Ovary (tissue), 10 donors: ENCODE measurements at regions of chr3 and their contacts with region 1.

Region 1: GRCh38 chr3:153209596-153209995 is 47.6 kb downstream of the RAP2B start:
- DNase-seq: no peak
- H3K4me3 ChIP-seq: no peak overlapping the region
- H3K27ac ChIP-seq: no peak overlapping the region
- H3K4me1 ChIP-seq: no peaks in the 10 kb centered on the region
- H3K27me3 ChIP-seq: no peaks in the 10 kb centered on the region
- CTCF ChIP-seq: no peak
- EP300 ChIP-seq: no peak
- POLR2A ChIP-seq: no peak

Region 2: GRCh38 chr3:152902141-152902669 is 307.4 kb before region 1 on chr3:
- intact Hi-C with region 1: no loop called
- DNase-seq: no peak
- H3K4me3 ChIP-seq: no peak overlapping the region
- H3K27ac ChIP-seq: no peak overlapping the region
- H3K4me1 ChIP-seq: no peaks in the 10 kb centered on the region
- H3K27me3 ChIP-seq: no peaks in the 10 kb centered on the region
- CTCF ChIP-seq: no peak
- EP300 ChIP-seq: no peak
- POLR2A ChIP-seq: no peak

Region 3: GRCh38 chr3:153144779-153145178 is 64.8 kb before region 1 on chr3:
- intact Hi-C with region 1: loop called in 1 of 4 experiments (anchors 2 kb)
- DNase-seq: no peak
- H3K4me3 ChIP-seq: no peak overlapping the region
- H3K27ac ChIP-seq: no peak overlapping the region
- H3K4me1 ChIP-seq: no peaks in the 10 kb centered on the region
- H3K27me3 ChIP-seq: no peaks in the 10 kb centered on the region
- CTCF ChIP-seq: no peak
- EP300 ChIP-seq: no peak
- POLR2A ChIP-seq: no peak